ENCODE measurements at regions of chr7 and their contacts with region 1.

Region 1: DNA sequence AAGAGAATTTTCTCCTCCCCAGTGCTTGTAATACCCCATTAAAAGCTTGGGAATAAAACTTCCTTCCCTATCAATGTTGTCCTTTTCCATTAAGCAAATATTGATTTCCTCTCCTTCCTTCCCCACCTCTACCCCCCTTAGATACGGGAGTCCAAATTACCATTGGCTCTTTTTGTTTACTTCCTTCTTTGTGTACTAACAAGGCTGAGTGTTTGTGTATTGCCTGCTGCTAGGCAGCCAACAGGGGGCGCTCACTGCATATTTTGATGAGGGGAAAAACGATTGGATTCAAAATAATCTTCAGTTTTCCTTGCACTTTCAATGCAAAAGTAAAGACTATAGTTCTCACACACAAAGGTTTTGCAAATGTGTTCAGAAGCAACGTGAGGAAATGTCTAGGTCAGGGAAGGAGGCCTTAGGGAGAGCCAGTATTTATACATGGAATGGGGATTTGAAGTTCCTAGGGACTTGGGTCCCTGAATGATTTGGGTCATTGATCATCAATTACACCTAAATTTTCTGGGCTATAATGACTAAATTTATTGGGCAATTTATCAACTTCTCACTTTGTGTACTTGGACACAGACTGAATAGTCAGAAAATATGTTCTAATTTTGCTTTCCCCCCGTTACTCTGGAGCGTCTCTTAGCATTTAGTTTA is 23.6 kb upstream of the VPS41 start:
- DNase-seq: peak; percentile 81
- ATAC-seq: peak; percentile 39
- H3K4me3 Mint-ChIP-seq: no peak overlapping the region
- H3K27ac Mint-ChIP-seq: no peak overlapping the region
- H3K4me1 Mint-ChIP-seq: no peaks in the 10 kb centered on the region
- H3K27me3 Mint-ChIP-seq: peaks cover 6% of the 10 kb centered on the region

Region 2: GRCh38 chr7:38330861-38331621 is 601.6 kb before region 1 on chr7:
- CTCF ChIA-PET with region 1: no interaction called
- POLR2A ChIA-PET with region 1: no interaction called
- intact Hi-C with region 1: no loop called
- DNase-seq: peak; percentile 48
- ATAC-seq: no peak
- H3K4me3 Mint-ChIP-seq: peak overlapping the region; percentile 15
- H3K27ac Mint-ChIP-seq: peak overlapping the region; percentile 58
- H3K4me1 Mint-ChIP-seq: peaks cover 49% of the 10 kb centered on the region
- H3K27me3 Mint-ChIP-seq: no peaks in the 10 kb centered on the region

Region 3: GRCh38 chr7:38796626-38797501 is 135.8 kb before region 1 on chr7:
- CTCF ChIA-PET with region 1: interaction called, 5 read pairs
- POLR2A ChIA-PET with region 1: no interaction called
- intact Hi-C with region 1: loop called in 1 of 2 experiments (anchors 2 kb)
- DNase-seq: peak; percentile 65
- ATAC-seq: no peak
- H3K4me3 Mint-ChIP-seq: no peak overlapping the region
- H3K27ac Mint-ChIP-seq: no peak overlapping the region
- H3K4me1 Mint-ChIP-seq: no peaks in the 10 kb centered on the region
- H3K27me3 Mint-ChIP-seq: no peaks in the 10 kb centered on the region

Region 4: GRCh38 chr7:38962028-38962427 is 29.4 kb after region 1 on chr7:
- CTCF ChIA-PET with region 1: interaction called, 3 read pairs
- POLR2A ChIA-PET with region 1: no interaction called
- intact Hi-C with region 1: loop called in 1 of 2 experiments (anchors 1 kb)
- DNase-seq: no peak
- ATAC-seq: no peak
- H3K4me3 Mint-ChIP-seq: no peak overlapping the region
- H3K27ac Mint-ChIP-seq: no peak overlapping the region
- H3K4me1 Mint-ChIP-seq: no peaks in the 10 kb centered on the region
- H3K27me3 Mint-ChIP-seq: peaks cover 6% of the 10 kb centered on the region

Region 5: DNA sequence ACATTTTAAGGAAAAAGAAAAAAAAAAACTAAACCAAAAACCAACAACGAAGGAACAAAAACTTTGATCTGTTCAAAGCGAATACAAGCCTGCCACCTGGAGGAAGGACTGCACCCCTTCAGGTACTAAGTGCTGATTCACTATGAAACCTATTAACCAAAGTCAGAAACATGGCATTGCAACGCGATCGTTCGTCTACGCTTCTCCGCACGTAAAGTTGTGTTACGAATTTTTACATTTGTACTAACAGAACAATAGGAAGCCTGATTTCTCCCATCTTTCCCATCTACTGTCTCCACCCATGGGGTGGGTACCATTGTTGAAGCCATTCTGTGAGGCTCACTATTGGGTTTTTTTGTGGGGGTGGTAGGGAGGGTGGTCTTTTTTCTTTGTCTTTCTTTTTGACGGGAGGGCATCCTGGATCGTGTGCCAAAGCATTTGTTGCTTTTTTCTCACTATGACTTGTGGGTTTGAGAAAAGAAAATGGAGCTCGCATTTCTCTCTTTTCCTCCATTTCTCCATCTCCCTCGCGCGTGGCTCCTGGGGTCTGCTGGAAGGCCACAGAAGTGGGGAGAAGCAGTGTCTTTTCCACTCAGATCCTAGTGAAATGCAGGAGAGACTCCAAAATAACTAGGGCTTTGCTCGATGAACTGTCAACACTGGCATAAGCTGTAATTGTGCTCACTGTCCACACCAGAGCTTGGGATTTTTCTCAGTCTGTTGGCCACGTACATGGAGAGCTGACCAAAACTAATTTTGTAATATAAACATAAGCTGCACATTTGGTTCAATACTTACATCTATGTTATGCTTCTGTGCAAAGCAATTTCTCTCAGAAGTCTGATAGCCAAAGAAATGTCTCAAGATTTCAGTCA is 532.7 kb after region 1 on chr7:
- CTCF ChIA-PET with region 1: interaction called, 3 read pairs
- POLR2A ChIA-PET with region 1: no interaction called
- intact Hi-C with region 1: loop called (anchors 1 to 2 kb)
- DNase-seq: peak; percentile 68
- ATAC-seq: peak; percentile 86
- H3K4me3 Mint-ChIP-seq: no peak overlapping the region
- H3K27ac Mint-ChIP-seq: no peak overlapping the region
- H3K4me1 Mint-ChIP-seq: peaks cover 2% of the 10 kb centered on the region
- H3K27me3 Mint-ChIP-seq: peaks cover 7% of the 10 kb centered on the region

Region 6: DNA sequence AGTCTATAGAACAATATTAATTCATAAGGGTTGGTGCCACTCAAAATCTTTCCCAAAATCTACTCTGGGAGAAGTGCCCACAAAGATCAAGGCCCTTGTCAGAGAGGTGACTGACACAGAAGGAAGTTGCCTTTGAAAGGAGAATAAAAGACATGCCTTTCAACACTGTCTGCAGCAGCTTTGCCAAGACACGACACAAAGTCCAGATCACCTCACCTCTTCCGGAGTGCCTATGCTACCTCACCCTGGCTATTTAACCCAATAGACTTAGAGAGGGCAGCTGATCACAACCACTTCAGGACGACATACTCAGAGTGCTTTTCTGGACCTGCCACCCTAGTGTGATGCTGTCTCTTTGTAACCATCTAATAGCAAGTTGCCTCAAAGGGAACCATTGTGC is 584.6 kb after region 1 on chr7:
- CTCF ChIA-PET with region 1: no interaction called
- POLR2A ChIA-PET with region 1: no interaction called
- intact Hi-C with region 1: loop called (anchors 1 to 10 kb)
- DNase-seq: no peak
- ATAC-seq: no peak
- H3K4me3 Mint-ChIP-seq: no peak overlapping the region
- H3K27ac Mint-ChIP-seq: no peak overlapping the region
- H3K4me1 Mint-ChIP-seq: no peaks in the 10 kb centered on the region
- H3K27me3 Mint-ChIP-seq: peaks cover 1% of the 10 kb centered on the region

Region 7: GRCh38 chr7:39527296-39527695 is 594.7 kb after region 1 on chr7:
- CTCF ChIA-PET with region 1: interaction called, 4 read pairs
- POLR2A ChIA-PET with region 1: no interaction called
- intact Hi-C with region 1: loop called in 1 of 2 experiments (anchors 10 kb)
- DNase-seq: no peak
- ATAC-seq: no peak
- H3K4me3 Mint-ChIP-seq: no peak overlapping the region
- H3K27ac Mint-ChIP-seq: no peak overlapping the region
- H3K4me1 Mint-ChIP-seq: no peaks in the 10 kb centered on the region
- H3K27me3 Mint-ChIP-seq: peaks cover 7% of the 10 kb centered on the region